ENCODE measurements at regions of chr1 and their contacts with region 1.

Region 1: GRCh38 chr1:196148367-196148970 is 459.8 kb downstream of the KCNT2 start:
- DNase-seq: peak; percentile 63
- H3K4me3 ChIP-seq: no peak overlapping the region
- H3K27ac ChIP-seq: no peak overlapping the region
- H3K4me1 ChIP-seq: no peaks in the 10 kb centered on the region
- H3K27me3 ChIP-seq: no peaks in the 10 kb centered on the region
- CTCF ChIP-seq: peak; percentile 17 to 31
- POLR2A ChIP-seq: no peak

Region 2: DNA sequence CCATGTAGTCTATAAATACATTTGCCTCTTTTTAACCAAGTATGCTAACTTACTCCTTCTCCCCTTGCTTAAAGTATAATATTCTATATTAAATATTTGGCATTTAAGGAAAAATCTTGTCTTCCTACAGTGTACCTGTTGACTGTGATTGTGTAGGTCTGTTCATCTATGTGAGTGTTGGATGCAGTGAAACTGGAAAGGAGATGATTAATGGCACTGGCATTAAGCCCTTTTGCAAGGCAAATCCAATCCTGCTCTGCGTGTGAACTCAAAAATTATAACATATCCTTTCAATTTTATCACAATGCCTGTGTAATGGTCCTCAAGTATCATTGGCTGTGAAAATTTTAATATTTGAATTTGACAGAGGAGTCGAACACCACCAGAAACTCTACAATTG is 105.2 kb before region 1 on chr1:
- CTCF ChIA-PET with region 1: no interaction called
- POLR2A ChIA-PET with region 1: no interaction called
- dilution Hi-C with region 1: no loop called
- intact Hi-C with region 1: no loop called
- DNase-seq: no peak
- H3K4me3 ChIP-seq: no peak overlapping the region
- H3K27ac ChIP-seq: no peak overlapping the region
- H3K4me1 ChIP-seq: no peaks in the 10 kb centered on the region
- H3K27me3 ChIP-seq: no peaks in the 10 kb centered on the region
- CTCF ChIP-seq: no peak
- POLR2A ChIP-seq: no peak

Region 3: DNA sequence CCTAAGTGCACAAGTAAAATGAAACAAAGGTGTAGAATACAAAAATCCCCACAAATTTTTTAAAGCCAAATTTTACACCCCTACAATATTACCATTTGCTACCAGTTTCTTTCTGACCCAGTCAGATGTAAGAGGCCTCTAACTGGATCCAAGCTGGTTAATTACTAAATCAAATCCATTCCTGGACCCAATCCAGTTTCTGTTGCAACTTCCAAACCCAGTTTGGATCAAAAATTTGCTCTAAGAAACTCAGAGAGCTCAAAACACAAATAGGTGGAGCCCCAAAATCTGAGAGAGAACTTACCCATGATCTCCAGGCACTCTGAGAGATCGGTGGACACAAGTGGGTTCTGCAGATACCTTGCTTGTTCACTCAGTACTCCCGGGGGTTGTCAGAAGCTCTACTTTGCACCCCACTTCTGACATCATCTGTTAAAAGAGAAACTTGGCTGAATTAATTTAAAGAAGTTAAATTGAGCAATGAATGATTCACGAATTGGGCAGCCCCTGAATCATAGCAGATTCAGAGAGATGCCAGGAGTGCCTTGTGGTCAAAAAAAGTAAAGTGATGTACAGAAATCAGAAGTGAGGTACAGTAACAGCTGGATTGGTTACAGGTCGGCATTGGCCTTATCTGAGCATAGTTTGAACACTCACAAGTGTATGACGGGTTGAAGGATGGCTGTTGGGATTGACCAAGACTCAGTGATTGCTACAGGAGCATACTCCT is 11.8 kb after region 1 on chr1:
- CTCF ChIA-PET with region 1: interaction called, 23 read pairs
- POLR2A ChIA-PET with region 1: no interaction called
- dilution Hi-C with region 1: no loop called
- intact Hi-C with region 1: no loop called
- DNase-seq: no peak
- H3K4me3 ChIP-seq: no peak overlapping the region
- H3K27ac ChIP-seq: no peak overlapping the region
- H3K4me1 ChIP-seq: no peaks in the 10 kb centered on the region
- H3K27me3 ChIP-seq: no peaks in the 10 kb centered on the region
- CTCF ChIP-seq: no peak
- POLR2A ChIP-seq: no peak

Region 4: GRCh38 chr1:196295766-196296165 is 147.3 kb after region 1 on chr1:
- CTCF ChIA-PET with region 1: interaction called, 23 read pairs
- POLR2A ChIA-PET with region 1: no interaction called
- dilution Hi-C with region 1: no loop called
- intact Hi-C with region 1: no loop called
- DNase-seq: peak; percentile 21
- H3K4me3 ChIP-seq: no peak overlapping the region
- H3K27ac ChIP-seq: no peak overlapping the region
- H3K4me1 ChIP-seq: no peaks in the 10 kb centered on the region
- H3K27me3 ChIP-seq: no peaks in the 10 kb centered on the region
- CTCF ChIP-seq: no peak
- POLR2A ChIP-seq: no peak

Region 5: DNA sequence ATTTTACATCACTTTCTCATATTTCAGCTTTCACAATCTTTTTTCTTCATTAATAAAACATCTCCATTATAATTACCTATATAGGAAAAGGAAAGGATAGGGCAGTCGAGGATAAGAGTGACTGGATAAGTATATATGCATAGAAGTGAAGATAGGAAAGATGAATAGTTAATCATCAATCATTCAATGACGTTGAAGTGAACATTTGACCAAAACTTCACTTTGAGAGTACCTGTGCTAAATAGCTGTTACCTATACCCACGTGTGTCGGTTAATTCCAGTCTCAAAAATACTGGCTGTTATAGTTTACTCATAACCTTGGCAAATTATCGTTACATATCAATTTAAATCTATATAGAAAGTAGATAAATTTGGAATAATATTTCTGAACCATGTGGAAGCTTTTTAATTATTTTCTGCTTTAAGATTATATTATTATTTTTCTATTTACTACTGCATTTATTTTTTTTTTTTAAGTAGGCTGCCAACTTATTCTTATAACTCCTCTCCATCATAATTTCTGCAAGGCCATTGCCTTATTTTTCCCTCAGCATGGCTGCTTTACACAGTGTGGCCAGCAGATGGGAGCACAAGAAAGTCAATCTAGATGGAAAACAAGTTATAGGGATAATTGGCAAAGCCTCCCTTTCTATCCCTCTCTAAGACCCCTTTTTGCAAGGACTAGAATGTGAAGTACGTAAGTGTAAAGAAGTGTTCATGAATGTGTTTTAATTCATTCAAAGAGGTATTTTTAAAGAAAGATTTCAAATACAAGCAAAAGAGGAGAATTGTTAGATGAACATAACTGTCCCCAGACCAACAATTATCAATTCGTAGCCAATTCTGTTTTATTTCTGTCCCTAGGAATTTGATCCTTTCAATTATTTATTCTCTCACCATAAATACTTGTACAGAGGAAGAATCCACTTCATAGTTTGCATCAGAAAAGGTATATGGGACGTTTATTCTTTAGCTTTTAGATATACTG is 169.4 kb after region 1 on chr1:
- CTCF ChIA-PET with region 1: interaction called, 41 read pairs
- POLR2A ChIA-PET with region 1: no interaction called
- dilution Hi-C with region 1: no loop called
- intact Hi-C with region 1: no loop called
- DNase-seq: peak; percentile 62
- H3K4me3 ChIP-seq: no peak overlapping the region
- H3K27ac ChIP-seq: no peak overlapping the region
- H3K4me1 ChIP-seq: no peaks in the 10 kb centered on the region
- H3K27me3 ChIP-seq: no peaks in the 10 kb centered on the region
- CTCF ChIP-seq: peak; percentile 47 to 62
- POLR2A ChIP-seq: no peak

Region 6: GRCh38 chr1:196372896-196373536 is 224.5 kb after region 1 on chr1:
- CTCF ChIA-PET with region 1: interaction called, 7 read pairs
- POLR2A ChIA-PET with region 1: no interaction called
- dilution Hi-C with region 1: no loop called
- intact Hi-C with region 1: loop called (anchors 2 kb)
- DNase-seq: peak; percentile 54
- H3K4me3 ChIP-seq: no peak overlapping the region
- H3K27ac ChIP-seq: no peak overlapping the region
- H3K4me1 ChIP-seq: no peaks in the 10 kb centered on the region
- H3K27me3 ChIP-seq: no peaks in the 10 kb centered on the region
- CTCF ChIP-seq: peak; percentile 18 to 22
- POLR2A ChIP-seq: no peak